Astrocyte of the cerebellum (primary cell): ENCODE measurements at regions of chr3 and their contacts with region 1.

Region 1: DNA sequence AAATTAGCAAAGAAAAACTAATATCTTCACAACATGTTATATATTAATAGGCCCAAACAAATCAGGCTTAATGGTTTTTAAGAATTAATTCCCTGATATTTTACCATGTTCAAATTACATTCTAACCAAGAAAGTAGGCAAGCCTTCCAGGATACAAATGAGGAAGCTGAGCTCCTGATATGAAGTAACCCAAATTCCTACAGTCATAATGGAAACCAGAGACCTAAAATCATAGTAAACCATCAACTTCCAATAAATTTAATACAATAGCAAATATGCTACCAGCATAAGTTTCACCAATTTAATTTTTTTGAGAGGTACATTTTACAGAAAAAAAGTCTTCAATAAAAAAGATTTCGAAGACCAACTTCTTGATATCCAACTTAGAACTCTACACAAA is 3.8 kb downstream of the DCBLD2 start:
- DNase-seq: no peak
- H3K4me3 ChIP-seq: peak overlapping the region; percentile 95
- CTCF ChIP-seq: no peak

Region 2: DNA sequence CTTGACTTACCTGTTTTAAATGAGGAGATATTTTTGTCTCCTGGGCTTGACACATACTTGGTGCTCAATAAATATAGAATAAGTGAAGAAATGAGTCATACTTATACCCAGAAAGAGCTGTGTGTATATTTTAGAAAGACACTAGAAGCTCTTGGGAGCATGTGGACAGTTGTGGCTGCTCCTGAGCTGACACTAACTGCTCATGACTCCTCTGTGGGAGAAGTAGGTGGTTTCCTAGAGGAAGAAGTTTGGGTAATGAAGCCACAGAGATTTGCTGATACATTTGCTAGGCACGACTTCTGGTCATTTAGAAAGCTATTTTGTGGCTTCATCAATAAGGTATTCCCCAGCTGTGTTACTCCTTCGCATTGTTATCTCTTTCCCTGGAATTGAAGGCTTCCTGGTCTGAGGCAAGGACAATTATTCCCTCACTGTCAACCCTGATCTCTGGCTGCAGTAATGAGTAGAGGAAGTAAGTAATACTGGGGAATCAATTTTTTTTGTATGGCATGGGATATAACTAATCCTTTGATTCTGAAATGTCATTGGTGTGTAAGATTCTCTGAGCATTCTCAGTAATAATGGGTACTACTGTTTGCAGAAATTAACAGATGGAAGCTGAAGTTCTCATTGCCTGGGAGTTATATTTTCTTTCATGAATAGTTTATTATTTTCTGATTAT is 83.4 kb after region 1 on chr3:
- in situ Hi-C with region 1: loop called (anchors 5 kb)
- DNase-seq: peak; percentile 53
- H3K4me3 ChIP-seq: peak overlapping the region; percentile 29
- CTCF ChIP-seq: no peak